B cell (primary cell): ENCODE measurements at regions of chr15 and their contacts with region 1.

Region 1: GRCh38 chr15:63188926-63189871 is at the start of gene RAB8B:
- DNase-seq: peak; percentile 94
- ATAC-seq: peak; percentile 86
- H3K4me3 ChIP-seq: peak within 1 kb of the TSS; percentile 78 to 99 (median 94)
- H3K4me3 Mint-ChIP-seq: peak within 1 kb of the TSS; percentile 98
- H3K27ac ChIP-seq: peak within 1 kb of the TSS; percentile 92 to 93
- H3K27ac Mint-ChIP-seq: peak within 1 kb of the TSS; percentile 94
- H3K4me1 ChIP-seq: peaks cover 39 to 44% of the 10 kb centered on the region in 2 donors
- H3K4me1 Mint-ChIP-seq: peaks cover 53% of the 10 kb centered on the region
- H3K27me3 ChIP-seq: no peaks in the 10 kb centered on the region
- H3K27me3 Mint-ChIP-seq: no peaks in the 10 kb centered on the region
- CTCF ChIP-seq: no peak
- total RNA-seq, gene RAB8B: 58.1 and 61.3 TPM in 2 replicates

Region 2: DNA sequence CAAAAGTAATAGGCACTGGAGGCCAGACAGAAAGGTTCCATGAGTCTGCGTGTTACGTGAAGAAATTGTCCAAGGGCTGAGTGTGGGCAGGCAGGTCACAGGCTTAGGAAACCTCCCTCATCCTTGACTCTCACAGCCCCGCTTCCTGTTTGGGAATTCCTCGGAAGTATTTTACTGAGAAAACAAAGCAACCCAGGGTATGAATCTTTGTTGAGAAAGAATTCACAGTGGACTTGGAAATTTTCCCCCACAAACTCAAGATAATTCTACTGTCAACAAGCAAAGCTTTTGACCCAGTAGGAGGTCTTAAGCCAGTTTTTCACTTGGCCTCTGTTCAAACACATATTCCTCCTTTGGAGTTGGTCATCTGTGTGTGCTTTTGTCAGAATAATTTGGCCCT is 523.8 kb before region 1 on chr15:
- CTCF ChIA-PET with region 1: no interaction called
- POLR2A ChIA-PET with region 1: no interaction called
- intact Hi-C with region 1: no loop called
- DNase-seq: no peak
- ATAC-seq: no peak
- H3K4me3 ChIP-seq: no peak overlapping the region
- H3K4me3 Mint-ChIP-seq: no peak overlapping the region
- H3K27ac ChIP-seq: no peak overlapping the region
- H3K27ac Mint-ChIP-seq: no peak overlapping the region
- H3K4me1 ChIP-seq: no peaks in the 10 kb centered on the region
- H3K4me1 Mint-ChIP-seq: no peaks in the 10 kb centered on the region
- H3K27me3 ChIP-seq: no peaks in the 10 kb centered on the region
- H3K27me3 Mint-ChIP-seq: no peaks in the 10 kb centered on the region
- CTCF ChIP-seq: no peak

Region 3: DNA sequence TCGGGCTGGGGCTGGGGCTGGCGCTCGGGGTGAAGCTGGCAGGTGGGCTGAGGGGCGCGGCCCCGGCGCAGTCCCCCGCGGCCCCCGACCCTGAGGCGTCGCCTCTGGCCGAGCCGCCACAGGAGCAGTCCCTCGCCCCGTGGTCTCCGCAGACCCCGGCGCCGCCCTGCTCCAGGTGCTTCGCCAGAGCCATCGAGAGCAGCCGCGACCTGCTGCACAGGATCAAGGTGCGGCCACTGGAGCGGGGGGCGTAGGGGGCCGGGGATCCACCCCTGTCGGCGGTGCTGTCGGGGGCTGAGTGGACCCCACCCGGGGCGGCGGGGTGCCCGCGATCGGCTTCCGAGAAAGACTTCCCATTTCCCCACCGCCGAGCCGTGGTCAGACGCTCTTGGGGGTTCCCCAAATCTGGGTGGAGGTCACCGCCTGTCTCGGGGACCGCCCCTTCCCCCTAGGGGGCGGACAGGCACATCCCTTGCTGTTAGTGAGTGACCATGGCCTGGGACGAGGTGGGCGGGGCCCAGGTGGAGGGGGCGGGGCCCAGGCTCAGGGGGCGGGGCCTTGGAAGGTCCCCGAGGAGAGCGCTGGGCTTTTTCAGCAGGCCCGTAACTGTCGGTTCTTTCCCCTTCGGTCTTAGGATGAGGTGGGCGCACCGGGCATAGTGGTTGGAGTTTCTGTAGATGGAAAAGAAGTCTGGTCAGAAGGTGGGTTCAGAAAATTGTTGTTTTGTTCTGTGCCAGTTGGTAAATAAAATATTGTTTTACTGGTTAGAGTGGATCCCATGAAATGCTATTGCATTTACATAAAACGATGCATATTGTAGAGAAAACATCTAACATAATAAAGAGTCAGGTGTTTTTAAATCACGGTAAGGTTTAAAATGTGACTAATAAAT is 67.0 kb before region 1 on chr15:
- CTCF ChIA-PET with region 1: no interaction called
- POLR2A ChIA-PET with region 1: no interaction called
- intact Hi-C with region 1: loop called (anchors 1 kb)
- DNase-seq: peak; percentile 87
- ATAC-seq: peak; percentile 87
- H3K4me3 ChIP-seq: peak overlapping the region; percentile 66 to 95 (median 88)
- H3K4me3 Mint-ChIP-seq: peak overlapping the region; percentile 86
- H3K27ac ChIP-seq: peak overlapping the region; percentile 71 to 85
- H3K27ac Mint-ChIP-seq: peak overlapping the region; percentile 93
- H3K4me1 ChIP-seq: peaks cover 6 to 9% of the 10 kb centered on the region in 2 donors
- H3K4me1 Mint-ChIP-seq: peaks cover 14% of the 10 kb centered on the region
- H3K27me3 ChIP-seq: no peaks in the 10 kb centered on the region
- H3K27me3 Mint-ChIP-seq: no peaks in the 10 kb centered on the region
- CTCF ChIP-seq: peak; percentile 12

Region 4: GRCh38 chr15:63203451-63204090 is 14.4 kb after region 1 on chr15:
- CTCF ChIA-PET with region 1: interaction called, 22 read pairs
- POLR2A ChIA-PET with region 1: interaction called, 4 read pairs
- intact Hi-C with region 1: loop called (anchors 1 kb)
- DNase-seq: peak; percentile 77
- ATAC-seq: peak; percentile 99
- H3K4me3 ChIP-seq: no peak overlapping the region
- H3K4me3 Mint-ChIP-seq: peak overlapping the region; percentile 35
- H3K27ac ChIP-seq: peak overlapping the region in 1 of 2 donors; percentile 23
- H3K27ac Mint-ChIP-seq: peak overlapping the region; percentile 66
- H3K4me1 ChIP-seq: peaks cover 19 to 28% of the 10 kb centered on the region in 2 donors
- H3K4me1 Mint-ChIP-seq: peaks cover 80% of the 10 kb centered on the region
- H3K27me3 ChIP-seq: no peaks in the 10 kb centered on the region
- H3K27me3 Mint-ChIP-seq: no peaks in the 10 kb centered on the region
- CTCF ChIP-seq: peak; percentile 38

Region 5: GRCh38 chr15:63226966-63227401 is 37.8 kb after region 1 on chr15:
- CTCF ChIA-PET with region 1: interaction called, 5 read pairs
- POLR2A ChIA-PET with region 1: no interaction called
- intact Hi-C with region 1: loop called (anchors 5 kb)
- DNase-seq: no peak
- ATAC-seq: no peak
- H3K4me3 ChIP-seq: no peak overlapping the region
- H3K4me3 Mint-ChIP-seq: no peak overlapping the region
- H3K27ac ChIP-seq: peak overlapping the region in 1 of 2 donors; percentile 42
- H3K27ac Mint-ChIP-seq: peak overlapping the region; percentile 57
- H3K4me1 ChIP-seq: peaks cover 3 to 17% of the 10 kb centered on the region in 2 donors
- H3K4me1 Mint-ChIP-seq: peaks cover 46% of the 10 kb centered on the region
- H3K27me3 ChIP-seq: no peaks in the 10 kb centered on the region
- H3K27me3 Mint-ChIP-seq: no peaks in the 10 kb centered on the region
- CTCF ChIP-seq: no peak

Region 6: GRCh38 chr15:63277038-63277892 is 88.1 kb after region 1 on chr15 and contains the start of gene APH1B:
- CTCF ChIA-PET with region 1: interaction called, 5 read pairs
- POLR2A ChIA-PET with region 1: interaction called, 9 read pairs
- intact Hi-C with region 1: loop called (anchors 1 kb)
- DNase-seq: peak; percentile 85
- ATAC-seq: peak; percentile 97
- H3K4me3 ChIP-seq: peak within 1 kb of the TSS; percentile 74 to 98 (median 94)
- H3K4me3 Mint-ChIP-seq: peak within 1 kb of the TSS; percentile 92
- H3K27ac ChIP-seq: peak within 1 kb of the TSS; percentile 67 to 79
- H3K27ac Mint-ChIP-seq: peak within 1 kb of the TSS; percentile 94
- H3K4me1 ChIP-seq: peaks cover 12 to 14% of the 10 kb centered on the region in 2 donors
- H3K4me1 Mint-ChIP-seq: peaks cover 19% of the 10 kb centered on the region
- H3K27me3 ChIP-seq: no peaks in the 10 kb centered on the region
- H3K27me3 Mint-ChIP-seq: no peaks in the 10 kb centered on the region
- CTCF ChIP-seq: no peak
- total RNA-seq, gene APH1B: 45.2 and 47.0 TPM in 2 replicates

Region 7: GRCh38 chr15:63374686-63375520 is 185.7 kb after region 1 on chr15:
- CTCF ChIA-PET with region 1: no interaction called
- POLR2A ChIA-PET with region 1: no interaction called
- intact Hi-C with region 1: no loop called
- DNase-seq: no peak
- ATAC-seq: no peak
- H3K4me3 ChIP-seq: no peak overlapping the region
- H3K4me3 Mint-ChIP-seq: no peak overlapping the region
- H3K27ac ChIP-seq: no peak overlapping the region
- H3K27ac Mint-ChIP-seq: no peak overlapping the region
- H3K4me1 ChIP-seq: no peaks in the 10 kb centered on the region
- H3K4me1 Mint-ChIP-seq: no peaks in the 10 kb centered on the region
- H3K27me3 ChIP-seq: peaks cover 0 to 17% (median 4%) of the 10 kb centered on the region in 4 experiments
- H3K27me3 Mint-ChIP-seq: peaks cover 21% of the 10 kb centered on the region
- CTCF ChIP-seq: no peak